Activated B cell treated with CpG ODN at 0.5 μM for 24 hours (primary cell): ENCODE measurements at regions of chr9 and their contacts with region 1.

Region 1: DNA sequence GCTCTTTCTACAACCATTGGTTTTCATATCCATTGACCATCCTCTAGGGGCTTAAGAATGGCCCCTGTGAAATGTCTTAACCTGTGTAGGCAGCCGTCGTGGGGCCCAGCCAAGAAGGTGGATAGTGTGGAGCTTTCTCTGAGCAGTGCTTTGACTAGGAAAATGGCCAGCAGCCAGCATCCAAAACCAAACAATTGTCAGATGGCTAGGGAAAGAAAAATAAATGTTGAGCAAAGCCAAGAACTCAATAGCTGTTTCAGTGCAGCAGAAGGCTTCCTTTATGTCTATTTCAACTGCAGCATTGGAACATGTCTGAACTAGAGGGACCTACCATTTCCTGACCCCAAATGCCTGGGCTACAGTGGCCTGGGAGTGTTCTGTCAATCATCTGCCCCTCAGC is 374.9 kb downstream of the TLE4 start:
- DNase-seq: no peak
- ATAC-seq: no peak
- H3K4me3 Mint-ChIP-seq: no peak overlapping the region
- H3K27ac Mint-ChIP-seq: no peak overlapping the region
- H3K4me1 Mint-ChIP-seq: no peaks in the 10 kb centered on the region
- H3K27me3 Mint-ChIP-seq: no peaks in the 10 kb centered on the region
- CTCF ChIP-seq: no peak

Region 2: GRCh38 chr9:78439190-78439865 is 1507.4 kb before region 1 on chr9:
- CTCF ChIA-PET with region 1: no interaction called
- POLR2A ChIA-PET with region 1: no interaction called
- intact Hi-C with region 1: loop called (anchors 5 kb)
- DNase-seq: peak; percentile 37
- ATAC-seq: peak; percentile 78
- H3K4me3 Mint-ChIP-seq: no peak overlapping the region
- H3K27ac Mint-ChIP-seq: no peak overlapping the region
- H3K4me1 Mint-ChIP-seq: no peaks in the 10 kb centered on the region
- H3K27me3 Mint-ChIP-seq: peaks cover 18% of the 10 kb centered on the region
- CTCF ChIP-seq: peak; percentile 78

Region 3: GRCh38 chr9:78601957-78602565 is 1344.7 kb before region 1 on chr9:
- CTCF ChIA-PET with region 1: no interaction called
- POLR2A ChIA-PET with region 1: no interaction called
- intact Hi-C with region 1: loop called (anchors 1 kb)
- DNase-seq: no peak
- ATAC-seq: no peak
- H3K4me3 Mint-ChIP-seq: no peak overlapping the region
- H3K27ac Mint-ChIP-seq: no peak overlapping the region
- H3K4me1 Mint-ChIP-seq: no peaks in the 10 kb centered on the region
- H3K27me3 Mint-ChIP-seq: peaks cover 8% of the 10 kb centered on the region
- CTCF ChIP-seq: no peak

Region 4: GRCh38 chr9:79477955-79478771 is 468.5 kb before region 1 on chr9:
- CTCF ChIA-PET with region 1: no interaction called
- POLR2A ChIA-PET with region 1: no interaction called
- intact Hi-C with region 1: loop called (anchors 10 kb)
- DNase-seq: no peak
- ATAC-seq: no peak
- H3K4me3 Mint-ChIP-seq: no peak overlapping the region
- H3K27ac Mint-ChIP-seq: no peak overlapping the region
- H3K4me1 Mint-ChIP-seq: no peaks in the 10 kb centered on the region
- H3K27me3 Mint-ChIP-seq: no peaks in the 10 kb centered on the region
- CTCF ChIP-seq: no peak

Region 5: GRCh38 chr9:79757881-79758669 is 188.6 kb before region 1 on chr9:
- CTCF ChIA-PET with region 1: interaction called, 4 read pairs
- POLR2A ChIA-PET with region 1: no interaction called
- intact Hi-C with region 1: loop called (anchors 1 kb)
- DNase-seq: no peak
- ATAC-seq: no peak
- H3K4me3 Mint-ChIP-seq: no peak overlapping the region
- H3K27ac Mint-ChIP-seq: no peak overlapping the region
- H3K4me1 Mint-ChIP-seq: no peaks in the 10 kb centered on the region
- H3K27me3 Mint-ChIP-seq: no peaks in the 10 kb centered on the region
- CTCF ChIP-seq: no peak

Region 6: GRCh38 chr9:79912318-79913070 is 34.2 kb before region 1 on chr9:
- CTCF ChIA-PET with region 1: no interaction called
- POLR2A ChIA-PET with region 1: no interaction called
- intact Hi-C with region 1: no loop called
- DNase-seq: no peak
- ATAC-seq: no peak
- H3K4me3 Mint-ChIP-seq: no peak overlapping the region
- H3K27ac Mint-ChIP-seq: no peak overlapping the region
- H3K4me1 Mint-ChIP-seq: no peaks in the 10 kb centered on the region
- H3K27me3 Mint-ChIP-seq: no peaks in the 10 kb centered on the region
- CTCF ChIP-seq: no peak